ENCODE measurements at regions of chr11 and their contacts with region 1.

Region 1: GRCh38 chr11:27485930-27486773 is 13.6 kb upstream of the LGR4 start:
- DNase-seq: peak in 4 of 7 donors; percentile 22 to 65 (median 62)
- H3K4me3 ChIP-seq: no peak overlapping the region
- H3K27ac ChIP-seq: no peak overlapping the region
- H3K4me1 ChIP-seq: peaks cover 0 to 3% of the 10 kb centered on the region in 2 donors
- H3K27me3 ChIP-seq: no peaks in the 10 kb centered on the region
- CTCF ChIP-seq: peak; percentile 89 to 99 (median 94)
- POLR2A ChIP-seq: no peak

Region 2: GRCh38 chr11:27296497-27296896 is 189.7 kb before region 1 on chr11:
- intact Hi-C with region 1: loop called in 1 of 2 experiments (anchors 5 kb)
- DNase-seq: peak in 2 of 7 donors; percentile 17 to 28
- H3K4me3 ChIP-seq: no peak overlapping the region
- H3K27ac ChIP-seq: no peak overlapping the region
- H3K4me1 ChIP-seq: no peaks in the 10 kb centered on the region
- H3K27me3 ChIP-seq: no peaks in the 10 kb centered on the region
- CTCF ChIP-seq: peak; percentile 45 to 84 (median 74)
- POLR2A ChIP-seq: no peak

Measured in adrenal gland (tissue), 19 donors.